ENCODE measurements at regions of chrX and their contacts with region 1.

Region 1: DNA sequence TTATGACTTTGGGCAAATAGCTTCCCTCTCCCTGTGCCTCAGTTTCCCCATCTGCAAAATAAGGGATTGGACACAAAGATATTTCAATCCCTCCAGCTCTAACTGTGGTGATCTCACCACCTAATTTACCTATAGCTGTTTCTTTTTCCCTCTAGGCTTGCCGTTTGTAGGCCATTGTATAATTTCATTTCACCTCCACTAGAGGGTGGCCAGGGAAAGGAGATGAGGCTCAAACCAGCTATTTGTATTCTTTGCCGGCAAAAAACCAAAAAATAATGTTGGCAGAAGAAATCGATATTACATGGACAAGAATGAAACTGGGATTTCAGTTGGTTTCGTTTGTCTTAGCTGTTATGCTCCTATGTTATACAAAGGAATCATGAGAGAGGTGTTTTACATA is 36.1 kb upstream of the DOCK11 start:
- DNase-seq: peak; percentile 19 to 50
- H3K4me3 ChIP-seq: no peak overlapping the region
- H3K27ac ChIP-seq: no peak overlapping the region
- H3K4me1 ChIP-seq: no peaks in the 10 kb centered on the region
- H3K27me3 ChIP-seq: no peaks in the 10 kb centered on the region
- CTCF ChIP-seq: peak; percentile 84

Region 2: GRCh38 chrX:118474586-118474985 is 15.1 kb after region 1 on chrX:
- CTCF ChIA-PET with region 1: no interaction called
- POLR2A ChIA-PET with region 1: interaction called, 15 read pairs
- intact Hi-C with region 1: no loop called
- DNase-seq: no peak
- H3K4me3 ChIP-seq: no peak overlapping the region
- H3K27ac ChIP-seq: no peak overlapping the region
- H3K4me1 ChIP-seq: peaks cover 15% of the 10 kb centered on the region; the same call in 1 of the 2 replicates
- H3K27me3 ChIP-seq: no peaks in the 10 kb centered on the region
- CTCF ChIP-seq: no peak

Region 3: GRCh38 chrX:118528071-118528737 is 68.7 kb after region 1 on chrX:
- CTCF ChIA-PET with region 1: interaction called, 14 read pairs
- POLR2A ChIA-PET with region 1: no interaction called
- intact Hi-C with region 1: no loop called
- DNase-seq: no peak
- H3K4me3 ChIP-seq: no peak overlapping the region
- H3K27ac ChIP-seq: no peak overlapping the region
- H3K4me1 ChIP-seq: no peaks in the 10 kb centered on the region
- H3K27me3 ChIP-seq: no peaks in the 10 kb centered on the region
- CTCF ChIP-seq: no peak

Region 4: GRCh38 chrX:118545510-118545909 is 86.0 kb after region 1 on chrX:
- CTCF ChIA-PET with region 1: no interaction called
- POLR2A ChIA-PET with region 1: no interaction called
- intact Hi-C with region 1: loop called (anchors 10 kb)
- DNase-seq: no peak
- H3K4me3 ChIP-seq: no peak overlapping the region
- H3K27ac ChIP-seq: no peak overlapping the region
- H3K4me1 ChIP-seq: no peaks in the 10 kb centered on the region
- H3K27me3 ChIP-seq: no peaks in the 10 kb centered on the region
- CTCF ChIP-seq: no peak

Region 5: GRCh38 chrX:118603981-118604380 is 144.5 kb after region 1 on chrX:
- CTCF ChIA-PET with region 1: interaction called, 106 read pairs
- POLR2A ChIA-PET with region 1: interaction called, 17 read pairs
- intact Hi-C with region 1: loop called (anchors 1 kb)
- DNase-seq: peak; percentile 33 to 35
- H3K4me3 ChIP-seq: no peak overlapping the region
- H3K27ac ChIP-seq: no peak overlapping the region
- H3K4me1 ChIP-seq: 0 out of 2 replicates have a peak, but pooled peaks cover 7% of the 10 kb centered on the region
- H3K27me3 ChIP-seq: no peaks in the 10 kb centered on the region
- CTCF ChIP-seq: peak; percentile 87

Region 6: GRCh38 chrX:118807151-118808017 is 347.9 kb after region 1 on chrX:
- CTCF ChIA-PET with region 1: interaction called, 3 read pairs
- POLR2A ChIA-PET with region 1: no interaction called
- intact Hi-C with region 1: loop called (anchors 5 kb)
- DNase-seq: peak; percentile 44 to 53
- H3K4me3 ChIP-seq: no peak overlapping the region
- H3K27ac ChIP-seq: no peak overlapping the region
- H3K4me1 ChIP-seq: no peaks in the 10 kb centered on the region
- H3K27me3 ChIP-seq: no peaks in the 10 kb centered on the region
- CTCF ChIP-seq: peak; percentile 88